ENCODE measurements at regions of chr10 and their contacts with region 1.

Region 1: DNA sequence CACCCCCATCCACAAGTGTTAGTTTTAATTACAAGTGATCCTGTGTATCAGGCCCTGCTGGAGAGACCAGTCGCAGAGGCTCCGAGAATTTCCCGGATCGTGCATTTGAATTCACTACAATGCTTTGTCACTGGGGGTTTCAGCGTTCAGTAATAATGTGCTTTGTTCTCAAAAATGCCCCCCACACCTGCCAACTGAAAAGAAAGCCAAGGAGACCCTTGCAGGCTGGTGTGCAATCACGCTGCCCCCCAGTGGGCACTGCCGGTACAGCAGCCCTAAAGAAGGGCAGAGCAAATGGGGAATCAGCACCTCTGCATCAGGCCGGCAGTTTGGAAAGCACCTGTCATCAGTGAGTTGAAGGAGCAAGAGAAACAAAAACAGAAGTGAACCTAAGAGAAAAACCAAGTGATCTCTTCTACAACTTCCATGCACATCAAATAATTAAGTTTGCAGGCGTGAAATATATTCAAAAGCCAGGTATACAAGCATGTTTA is 177.6 kb downstream of the PARD3 start:
- DNase-seq: peak; percentile 10
- ATAC-seq: peak; percentile 71
- H3K4me3 ChIP-seq: no peak overlapping the region
- H3K27ac ChIP-seq: no peak overlapping the region
- H3K4me1 ChIP-seq: no peaks in the 10 kb centered on the region
- H3K27me3 ChIP-seq: no peaks in the 10 kb centered on the region
- CTCF ChIP-seq: peak; percentile 66 to 99 (median 99)
- POLR2A ChIP-seq: no peak
- RAD21 ChIP-seq: peak; percentile 82

Region 2: DNA sequence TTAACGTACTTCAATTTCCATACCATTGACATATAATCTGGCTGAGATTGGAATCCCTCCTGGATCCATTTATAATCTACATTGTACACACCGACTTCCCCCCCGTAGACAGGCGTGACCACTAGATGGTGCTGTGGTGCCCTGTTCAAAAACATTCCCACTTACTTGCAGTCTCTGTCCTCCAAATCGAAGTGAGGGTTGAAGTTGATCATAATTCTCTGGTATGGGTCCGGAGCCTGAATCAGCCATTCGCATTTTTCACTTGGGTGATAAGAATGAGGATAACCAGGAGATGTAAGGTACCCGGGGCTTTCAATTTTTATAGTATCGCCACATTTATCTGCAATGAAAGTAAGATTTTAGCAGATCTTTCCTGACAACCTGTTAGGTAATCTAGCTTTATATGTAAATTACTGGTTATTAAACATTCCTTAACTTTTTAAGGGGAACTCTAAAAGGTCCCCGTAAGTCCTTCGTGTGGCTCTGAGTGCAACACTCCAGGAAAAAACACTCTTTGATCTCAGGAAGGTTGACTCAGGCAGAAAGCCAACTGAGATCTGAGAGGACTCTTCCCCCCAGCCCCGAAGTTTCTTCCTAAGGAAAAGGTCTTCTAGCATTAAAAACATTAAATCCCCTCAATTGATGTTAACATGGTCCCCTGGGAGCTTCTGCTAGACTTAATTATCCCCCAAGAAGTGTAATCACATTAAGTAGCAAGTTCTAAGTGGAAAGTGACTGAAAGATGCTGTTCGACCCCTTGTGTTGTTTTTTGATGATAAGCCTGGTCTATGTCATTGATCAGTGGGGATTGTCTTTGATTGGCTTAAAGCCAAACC is 1306.7 kb before region 1 on chr10:
- CTCF ChIA-PET with region 1: interaction called, 9 read pairs
- POLR2A ChIA-PET with region 1: no interaction called
- RAD21 ChIA-PET with region 1: interaction called in 1 of 2 experiments, 4 read pairs
- intact Hi-C with region 1: loop called (anchors 1 kb)
- DNase-seq: peak; percentile 64
- ATAC-seq: peak; percentile 56
- H3K4me3 ChIP-seq: no peak overlapping the region
- H3K27ac ChIP-seq: no peak overlapping the region
- H3K4me1 ChIP-seq: peaks cover 2 to 27% of the 10 kb centered on the region in 2 experiments; a peak in 3 of 4 replicates
- H3K27me3 ChIP-seq: peaks cover 13% of the 10 kb centered on the region; the same call in 1 of the 2 replicates
- CTCF ChIP-seq: peak; percentile 66 to 97 (median 86)
- POLR2A ChIP-seq: no peak
- RAD21 ChIP-seq: peak; percentile 89

Region 3: DNA sequence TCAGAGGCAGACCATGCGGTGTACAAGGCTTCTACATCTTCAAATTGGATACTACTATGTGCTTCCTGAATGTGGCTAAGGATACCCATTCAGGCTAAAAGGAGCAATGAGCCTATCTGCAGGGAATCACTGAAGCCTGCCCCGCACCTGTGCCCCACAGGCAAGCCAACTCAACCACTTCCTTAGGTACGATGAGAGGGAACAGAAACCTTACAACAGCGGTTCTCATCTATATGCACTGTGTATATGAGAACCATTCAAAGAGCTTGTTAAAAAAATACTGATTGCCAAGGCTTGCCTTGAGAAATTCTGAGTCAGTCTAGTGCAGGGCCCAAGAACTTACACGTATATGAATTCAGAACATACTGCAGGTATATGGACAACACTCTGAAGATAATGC is 501.9 kb before region 1 on chr10:
- CTCF ChIA-PET with region 1: no interaction called
- POLR2A ChIA-PET with region 1: no interaction called
- RAD21 ChIA-PET with region 1: no interaction called
- intact Hi-C with region 1: no loop called
- DNase-seq: no peak
- ATAC-seq: no peak
- H3K4me3 ChIP-seq: no peak overlapping the region
- H3K27ac ChIP-seq: no peak overlapping the region
- H3K4me1 ChIP-seq: no peaks in the 10 kb centered on the region
- H3K27me3 ChIP-seq: no peaks in the 10 kb centered on the region
- CTCF ChIP-seq: no peak
- POLR2A ChIP-seq: no peak
- RAD21 ChIP-seq: no peak

Region 4: DNA sequence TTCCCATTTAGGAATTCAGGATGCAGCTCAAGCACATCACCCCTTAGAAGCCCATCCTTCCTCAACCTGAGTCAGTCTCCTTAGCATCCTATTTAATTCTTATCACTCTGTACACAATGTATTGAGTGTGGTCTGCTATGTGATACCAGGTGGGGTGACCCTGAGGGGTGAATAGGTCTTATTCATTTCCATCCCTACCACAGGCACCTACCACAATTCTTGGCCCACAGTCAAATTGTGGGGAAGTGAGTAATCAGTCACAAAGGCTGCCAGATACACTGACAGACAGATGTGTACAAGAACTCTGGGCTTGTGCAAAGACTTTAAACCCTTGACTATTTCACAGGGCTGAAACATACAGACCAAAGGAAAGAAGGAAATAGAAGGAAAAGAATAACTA is 382.9 kb before region 1 on chr10:
- CTCF ChIA-PET with region 1: interaction called, 3 read pairs
- POLR2A ChIA-PET with region 1: no interaction called
- RAD21 ChIA-PET with region 1: no interaction called
- intact Hi-C with region 1: loop called (anchors 5 kb)
- DNase-seq: peak; percentile 29
- ATAC-seq: peak; percentile 35; the same call in 1 of the 2 replicates
- H3K4me3 ChIP-seq: no peak overlapping the region
- H3K27ac ChIP-seq: no peak overlapping the region
- H3K4me1 ChIP-seq: peaks cover 10 to 22% of the 10 kb centered on the region in 2 experiments
- H3K27me3 ChIP-seq: no peaks in the 10 kb centered on the region
- CTCF ChIP-seq: no peak
- POLR2A ChIP-seq: no peak
- RAD21 ChIP-seq: 0 out of 2 replicates have a peak, but pooled peaks have one; percentile 7

Region 5: GRCh38 chr10:34522546-34522945 is 114.9 kb before region 1 on chr10:
- CTCF ChIA-PET with region 1: interaction called, 7 read pairs
- POLR2A ChIA-PET with region 1: no interaction called
- RAD21 ChIA-PET with region 1: interaction called in 1 of 2 experiments, 4 read pairs
- intact Hi-C with region 1: loop called (anchors 1 kb)
- DNase-seq: no peak
- ATAC-seq: peak; percentile 50; the same call in 1 of the 2 replicates
- H3K4me3 ChIP-seq: no peak overlapping the region
- H3K27ac ChIP-seq: no peak overlapping the region
- H3K4me1 ChIP-seq: peaks cover 16 to 22% of the 10 kb centered on the region in 2 experiments
- H3K27me3 ChIP-seq: no peaks in the 10 kb centered on the region
- CTCF ChIP-seq: peak; percentile 34 to 60 (median 57); a peak in 5 of 6 replicates
- POLR2A ChIP-seq: no peak
- RAD21 ChIP-seq: peak; percentile 55

Region 6: GRCh38 chr10:34599026-34599795 is 38.3 kb before region 1 on chr10:
- CTCF ChIA-PET with region 1: no interaction called
- POLR2A ChIA-PET with region 1: no interaction called
- RAD21 ChIA-PET with region 1: no interaction called
- intact Hi-C with region 1: no loop called
- DNase-seq: no peak
- ATAC-seq: no peak
- H3K4me3 ChIP-seq: no peak overlapping the region
- H3K27ac ChIP-seq: no peak overlapping the region
- H3K4me1 ChIP-seq: 0 out of 4 replicates have a peak, but pooled peaks cover 0 to 3% of the 10 kb centered on the region in 2 experiments
- H3K27me3 ChIP-seq: no peaks in the 10 kb centered on the region
- CTCF ChIP-seq: no peak
- POLR2A ChIP-seq: no peak
- RAD21 ChIP-seq: no peak

Region 7: GRCh38 chr10:34739915-34740314 is 102.5 kb after region 1 on chr10:
- CTCF ChIA-PET with region 1: no interaction called
- POLR2A ChIA-PET with region 1: no interaction called
- RAD21 ChIA-PET with region 1: no interaction called
- intact Hi-C with region 1: no loop called
- DNase-seq: no peak
- ATAC-seq: peak; percentile 65
- H3K4me3 ChIP-seq: no peak overlapping the region
- H3K27ac ChIP-seq: no peak overlapping the region
- H3K4me1 ChIP-seq: peaks cover 18 to 23% of the 10 kb centered on the region in 2 experiments
- H3K27me3 ChIP-seq: no peaks in the 10 kb centered on the region
- CTCF ChIP-seq: no peak
- POLR2A ChIP-seq: no peak
- RAD21 ChIP-seq: no peak